Mammary epithelial cell (primary cell): ENCODE measurements at regions of chr11 and their contacts with region 1.

Region 1: GRCh38 chr11:103608566-103608965 is 427.9 kb upstream of the DDI1 start:
- DNase-seq: peak; percentile 29
- H3K4me3 ChIP-seq: no peak overlapping the region
- H3K27ac ChIP-seq: no peak overlapping the region
- H3K4me1 ChIP-seq: peaks cover 25% of the 10 kb centered on the region
- H3K27me3 ChIP-seq: no peaks in the 10 kb centered on the region
- CTCF ChIP-seq: no peak

Region 2: GRCh38 chr11:103433386-103434380 is 174.9 kb before region 1 on chr11:
- CTCF ChIA-PET with region 1: interaction called, 11 read pairs
- dilution Hi-C with region 1: no loop called
- in situ Hi-C with region 1: no loop called
- intact Hi-C with region 1: no loop called
- DNase-seq: peak; percentile 85
- H3K4me3 ChIP-seq: no peak overlapping the region
- H3K27ac ChIP-seq: peak overlapping the region; percentile 63
- H3K4me1 ChIP-seq: peaks cover 12% of the 10 kb centered on the region
- H3K27me3 ChIP-seq: no peaks in the 10 kb centered on the region
- CTCF ChIP-seq: no peak

Region 3: GRCh38 chr11:103529181-103529684 is 79.3 kb before region 1 on chr11:
- CTCF ChIA-PET with region 1: no interaction called
- dilution Hi-C with region 1: no loop called
- in situ Hi-C with region 1: no loop called
- intact Hi-C with region 1: no loop called
- DNase-seq: peak; percentile 62
- H3K4me3 ChIP-seq: no peak overlapping the region
- H3K27ac ChIP-seq: peak overlapping the region; percentile 9
- H3K4me1 ChIP-seq: peaks cover 68% of the 10 kb centered on the region
- H3K27me3 ChIP-seq: no peaks in the 10 kb centered on the region
- CTCF ChIP-seq: no peak